Posterior vena cava (tissue), 2 donors: ENCODE measurements at regions of chr7 and their contacts with region 1.

Region 1: GRCh38 chr7:28853834-28854749 is 104.0 kb downstream of the TRIL start:
- DNase-seq: peak; percentile 95

Region 2: GRCh38 chr7:28389504-28390395 is 464.3 kb before region 1 on chr7:
- intact Hi-C with region 1: loop called in 1 of 2 experiments (anchors 5 kb)
- DNase-seq: no peak

Region 3: GRCh38 chr7:28395831-28396230 is 458.3 kb before region 1 on chr7:
- intact Hi-C with region 1: loop called in 1 of 2 experiments (anchors 5 kb)
- DNase-seq: no peak

Region 4: GRCh38 chr7:28551331-28551730 is 302.8 kb before region 1 on chr7:
- intact Hi-C with region 1: loop called in 1 of 2 experiments (anchors 10 kb)
- DNase-seq: no peak